RWPE1 (cell line): ENCODE measurements at regions of chr5 and their contacts with region 1.

Region 1: DNA sequence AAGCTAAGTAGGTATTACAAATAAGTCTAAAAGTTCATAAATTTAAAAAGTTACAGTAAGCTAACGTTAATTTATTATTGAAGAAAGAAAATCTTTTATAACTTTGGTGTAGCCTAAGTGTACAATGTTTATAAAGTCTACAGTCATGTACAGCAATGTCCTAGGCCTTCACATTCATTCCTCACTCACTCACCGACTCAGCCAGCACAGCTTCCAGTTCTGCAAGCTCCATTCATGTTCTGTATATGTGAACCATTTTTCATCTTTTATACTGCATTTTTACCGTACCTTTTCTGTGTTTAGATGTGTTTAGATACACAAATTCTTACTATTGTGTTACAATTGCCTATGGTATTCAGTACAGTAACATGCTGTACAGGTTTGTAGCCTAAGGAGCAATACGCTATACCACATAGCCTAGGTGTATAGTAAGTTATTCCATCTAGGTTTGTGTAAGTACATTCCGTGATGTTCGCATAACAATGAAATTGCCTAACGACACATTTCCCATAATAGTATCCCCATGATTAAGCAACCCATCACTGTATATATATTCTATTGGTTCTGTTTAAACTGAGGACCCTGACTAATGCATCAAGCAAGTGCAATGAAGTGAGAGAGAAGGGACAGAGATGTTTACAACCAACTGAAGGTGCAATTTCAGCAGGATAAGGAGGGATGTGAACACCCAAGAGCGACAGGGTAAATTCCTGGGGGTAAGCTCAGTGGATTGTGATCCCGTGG is 88.9 kb upstream of the TRIO start:
- DNase-seq: no peak
- H3K27ac ChIP-seq: no peak overlapping the region
- CTCF ChIP-seq: no peak

Region 2: GRCh38 chr5:14097998-14098471 is 43.8 kb after region 1 on chr5:
- CTCF ChIA-PET with region 1: interaction called, 11 read pairs
- POLR2A ChIA-PET with region 1: no interaction called
- DNase-seq: no peak
- H3K27ac ChIP-seq: no peak overlapping the region
- CTCF ChIP-seq: no peak